ENCODE measurements at regions of chr14 and their contacts with region 1.

Region 1: DNA sequence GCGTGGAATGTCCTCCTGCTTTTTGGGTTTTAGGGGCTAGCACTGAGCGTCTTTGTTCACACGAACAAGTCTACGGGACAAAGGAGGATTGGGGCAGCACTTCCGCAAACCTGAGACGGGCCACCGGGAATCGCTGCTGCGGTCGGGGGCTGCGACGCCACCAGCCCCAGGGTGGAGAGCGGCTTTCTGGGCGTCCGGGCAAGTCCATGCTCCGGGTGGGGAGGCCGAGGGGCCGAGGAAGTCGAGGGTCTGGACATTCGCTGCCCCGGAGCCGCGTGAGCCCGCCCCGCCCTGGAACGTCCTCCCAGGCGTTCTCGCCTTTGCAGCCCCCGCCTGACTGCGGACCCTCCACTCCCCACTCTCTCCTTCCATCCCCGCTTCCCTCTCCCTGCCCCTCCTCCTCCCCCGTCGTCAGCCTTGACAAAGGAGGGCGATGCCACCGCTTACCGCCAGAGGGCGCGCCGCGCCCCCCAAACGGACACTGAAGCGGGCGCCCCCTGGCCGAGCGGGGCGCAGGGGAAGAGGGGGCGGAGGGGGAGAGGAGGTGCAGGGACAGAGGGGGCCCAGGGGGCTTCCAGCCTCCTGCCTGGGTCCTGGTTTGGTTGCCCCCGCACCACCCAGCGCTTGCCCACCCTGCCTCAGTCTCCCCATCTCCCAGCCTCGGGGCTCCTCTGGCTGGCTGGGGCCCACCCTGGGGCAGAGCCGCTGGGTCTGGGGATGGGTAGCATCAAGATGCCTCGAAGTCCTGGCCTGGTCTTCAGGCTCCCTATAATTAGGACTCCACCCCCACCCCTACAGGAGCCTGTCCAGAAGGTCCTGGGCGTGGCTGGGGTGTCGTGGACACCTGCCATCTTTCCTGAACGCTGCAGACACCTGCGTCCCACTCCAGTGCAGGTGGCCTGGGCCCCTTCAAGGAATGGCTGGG is 39.1 kb upstream of the INF2 start:
- DNase-seq: peak; percentile 81
- ATAC-seq: peak; percentile 90

Region 2: GRCh38 chr14:104708606-104709268 is 58.4 kb after region 1 on chr14:
- intact Hi-C with region 1: loop called (anchors 2 kb)
- DNase-seq: peak; percentile 86
- ATAC-seq: peak; percentile 81

Measured in Right ventricle myocardium superior (tissue), 1 donor.